PC-9 (cell line): ENCODE measurements at regions of chr19 and their contacts with region 1.

Region 1: GRCh38 chr19:49451430-49452181 is at the start of gene PIH1D1:
- DNase-seq: peak; percentile 96 to 100
- H3K4me3 ChIP-seq: peak within 1 kb of the TSS; percentile 87
- H3K27ac ChIP-seq: peak within 1 kb of the TSS; percentile 92
- H3K4me1 ChIP-seq: peaks cover 13% of the 10 kb centered on the region
- H3K27me3 ChIP-seq: no peaks in the 10 kb centered on the region
- CTCF ChIP-seq: no peak
- total RNA-seq, gene PIH1D1: 156 and 184 TPM in 2 replicates

Region 2: GRCh38 chr19:49344507-49345423 is 106.8 kb before region 1 on chr19:
- CTCF ChIA-PET with region 1: no interaction called
- POLR2A ChIA-PET with region 1: no interaction called
- intact Hi-C with region 1: no loop called
- DNase-seq: no peak
- H3K4me3 ChIP-seq: no peak overlapping the region
- H3K27ac ChIP-seq: no peak overlapping the region
- H3K4me1 ChIP-seq: no peaks in the 10 kb centered on the region
- H3K27me3 ChIP-seq: no peaks in the 10 kb centered on the region
- CTCF ChIP-seq: no peak

Region 3: DNA sequence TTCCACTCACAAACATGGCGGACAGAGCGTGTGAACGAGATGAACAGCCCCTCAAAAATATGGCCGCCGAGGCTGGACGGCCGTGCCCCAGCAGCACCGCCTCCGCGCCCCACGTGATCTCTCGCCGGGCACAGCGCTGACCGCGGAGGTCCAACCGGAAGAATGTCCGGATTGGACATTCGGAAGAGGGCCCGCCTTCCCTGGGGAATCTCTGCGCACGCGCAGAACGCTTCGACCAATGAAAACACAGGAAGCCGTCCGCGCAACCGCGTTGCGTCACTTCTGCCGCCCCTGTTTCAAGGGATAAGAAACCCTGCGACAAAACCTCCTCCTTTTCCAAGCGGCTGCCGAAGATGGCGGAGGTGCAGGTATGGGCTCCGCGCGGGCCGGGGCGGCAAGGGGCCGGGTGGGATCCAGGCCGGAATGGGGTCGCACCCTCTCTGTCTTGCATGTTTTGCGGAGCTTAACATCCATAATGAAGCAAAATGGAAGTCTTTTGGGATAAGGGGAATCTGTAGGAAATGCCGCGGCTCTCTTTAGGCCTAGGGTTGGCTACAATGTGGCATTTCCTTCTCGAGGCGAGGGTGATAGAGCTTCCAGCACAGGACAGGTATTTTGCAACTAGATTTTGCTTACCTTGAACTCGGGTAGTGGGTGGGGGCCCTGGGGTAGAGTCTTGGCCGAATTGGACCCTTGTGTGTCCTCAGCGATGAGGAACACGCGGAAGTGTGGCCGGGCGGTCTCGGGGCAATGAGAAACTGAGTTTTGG is 35.9 kb after region 1 on chr19 and contains the start of gene RPL13A:
- CTCF ChIA-PET with region 1: no interaction called
- POLR2A ChIA-PET with region 1: interaction called, 4 read pairs
- intact Hi-C with region 1: loop called (anchors 1 kb)
- DNase-seq: peak; percentile 97 to 99
- H3K4me3 ChIP-seq: peak within 1 kb of the TSS; percentile 96
- H3K27ac ChIP-seq: peak within 1 kb of the TSS; percentile 91
- H3K4me1 ChIP-seq: peaks cover 18% of the 10 kb centered on the region
- H3K27me3 ChIP-seq: no peaks in the 10 kb centered on the region
- CTCF ChIP-seq: no peak
- total RNA-seq, gene RPL13A: 2,360 and 3,865 TPM in 2 replicates